Astrocyte of the cerebellum (primary cell): ENCODE measurements at regions of chr3 and their contacts with region 1.

Region 1: GRCh38 chr3:124007186-124007585 is 15.3 kb upstream of the ROPN1 start:
- DNase-seq: no peak
- H3K4me3 ChIP-seq: no peak overlapping the region
- CTCF ChIP-seq: no peak

Region 2: DNA sequence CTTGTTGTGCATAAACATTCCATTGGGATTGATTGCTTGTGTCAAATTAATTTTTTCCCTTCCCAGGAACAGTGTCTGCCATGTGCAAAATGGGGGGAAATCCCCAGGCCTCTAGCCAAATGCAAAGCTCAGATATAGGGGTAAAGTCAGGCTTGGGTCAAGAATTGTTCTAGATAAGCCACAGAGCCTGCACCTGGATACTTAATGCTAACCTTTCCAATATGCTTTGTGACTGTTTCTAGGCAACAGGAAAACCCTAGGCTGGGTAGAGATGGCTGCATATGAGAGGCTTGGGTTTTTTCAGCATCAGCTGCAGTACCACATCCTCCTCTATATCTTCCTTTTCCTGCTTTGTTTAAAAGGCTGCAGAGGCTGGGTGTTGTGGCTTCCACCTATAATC is 46.7 kb after region 1 on chr3:
- in situ Hi-C with region 1: no loop called
- DNase-seq: no peak
- H3K4me3 ChIP-seq: no peak overlapping the region
- CTCF ChIP-seq: no peak

Region 3: GRCh38 chr3:124467980-124468902 is 461.1 kb after region 1 on chr3:
- in situ Hi-C with region 1: loop called (anchors 25 kb)
- DNase-seq: peak; percentile 22
- H3K4me3 ChIP-seq: no peak overlapping the region
- CTCF ChIP-seq: peak; percentile 99